ENCODE measurements at regions of chr20 and their contacts with region 1.

Region 1: GRCh38 chr20:18650224-18650623 is 62.4 kb downstream of the DTD1 start:
- DNase-seq: no peak
- H3K4me3 ChIP-seq: no peak overlapping the region
- H3K27ac ChIP-seq: no peak overlapping the region
- H3K4me1 ChIP-seq: peaks cover 0 to 5% (median under 1%) of the 10 kb centered on the region in 4 experiments; a peak in 3 of 7 replicates
- H3K27me3 ChIP-seq: no peaks in the 10 kb centered on the region
- CTCF ChIP-seq: no peak
- EP300 ChIP-seq: no peak
- POLR2A ChIP-seq: no peak
- RAD21 ChIP-seq: no peak

Region 2: DNA sequence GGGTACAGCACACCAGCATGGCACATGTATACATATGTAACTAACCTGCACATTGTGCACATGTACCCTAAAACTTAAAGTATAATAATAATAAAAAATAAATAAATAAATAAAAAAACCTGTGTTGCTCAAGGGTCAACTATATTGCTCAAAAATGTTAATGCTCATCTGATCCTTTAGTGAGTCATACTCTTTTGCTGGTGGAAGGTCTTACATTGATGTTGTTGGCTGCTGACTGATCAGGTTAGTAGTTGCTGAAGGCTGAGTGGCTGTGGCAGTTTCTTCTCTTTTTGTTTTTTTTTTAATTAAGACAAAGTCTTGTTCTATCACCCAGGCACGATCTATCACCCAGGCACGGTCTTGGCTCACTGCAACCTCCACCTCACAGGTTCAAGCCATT is 112.6 kb before region 1 on chr20:
- CTCF ChIA-PET with region 1: no interaction called
- POLR2A ChIA-PET with region 1: no interaction called
- DNase-seq: no peak
- H3K4me3 ChIP-seq: no peak overlapping the region
- H3K27ac ChIP-seq: no peak overlapping the region
- H3K4me1 ChIP-seq: no peaks in the 10 kb centered on the region
- H3K27me3 ChIP-seq: no peaks in the 10 kb centered on the region
- CTCF ChIP-seq: no peak
- EP300 ChIP-seq: no peak
- POLR2A ChIP-seq: no peak
- RAD21 ChIP-seq: no peak

Region 3: GRCh38 chr20:18589941-18590674 is 60.1 kb before region 1 on chr20:
- CTCF ChIA-PET with region 1: no interaction called
- POLR2A ChIA-PET with region 1: no interaction called
- DNase-seq: no peak
- H3K4me3 ChIP-seq: peak overlapping the region in 1 of 4 experiments; percentile 73; a peak in 1 of 8 replicates
- H3K27ac ChIP-seq: no peak overlapping the region
- H3K4me1 ChIP-seq: peaks cover 3 to 8% (median 4%) of the 10 kb centered on the region in 4 experiments; a peak in 5 of 7 replicates
- H3K27me3 ChIP-seq: no peaks in the 10 kb centered on the region
- CTCF ChIP-seq: no peak
- EP300 ChIP-seq: no peak
- POLR2A ChIP-seq: no peak
- RAD21 ChIP-seq: no peak

Region 4: GRCh38 chr20:18639501-18639979 is 10.7 kb before region 1 on chr20:
- CTCF ChIA-PET with region 1: interaction called, 18 read pairs
- POLR2A ChIA-PET with region 1: no interaction called
- DNase-seq: no peak
- H3K4me3 ChIP-seq: no peak overlapping the region
- H3K27ac ChIP-seq: no peak overlapping the region
- H3K4me1 ChIP-seq: no peaks in the 10 kb centered on the region; a peak in 1 of 7 replicates
- H3K27me3 ChIP-seq: no peaks in the 10 kb centered on the region
- CTCF ChIP-seq: no peak
- EP300 ChIP-seq: no peak
- POLR2A ChIP-seq: no peak
- RAD21 ChIP-seq: no peak